ENCODE measurements at regions of chrX and their contacts with region 1.

Region 1: GRCh38 chrX:40539214-40540142 is 41.3 kb upstream of the ATP6AP2 start:
- DNase-seq: peak; percentile 55 to 80 (median 60)
- ATAC-seq: peak; percentile 97
- H3K4me3 ChIP-seq: no peak overlapping the region
- H3K27ac ChIP-seq: no peak overlapping the region
- H3K4me1 ChIP-seq: peaks cover 7 to 9% of the 10 kb centered on the region in 2 experiments; a peak in 3 of 5 replicates
- H3K27me3 ChIP-seq: 0 out of 5 replicates have a peak, but pooled peaks cover 0 to 6% of the 10 kb centered on the region in 2 experiments
- CTCF ChIP-seq: peak; percentile 64 to 76 (median 74)
- EP300 ChIP-seq: no peak
- POLR2A ChIP-seq: no peak
- RAD21 ChIP-seq: peak; percentile 35 to 70; a peak in 2 of 4 replicates

Region 2: GRCh38 chrX:39969099-39969818 is 570.2 kb before region 1 on chrX:
- CTCF ChIA-PET with region 1: no interaction called
- POLR2A ChIA-PET with region 1: no interaction called
- in situ Hi-C with region 1: no loop called
- intact Hi-C with region 1: no loop called
- DNase-seq: no peak
- ATAC-seq: peak; percentile 51; the same call in 2 of the 3 replicates
- H3K4me3 ChIP-seq: no peak overlapping the region
- H3K27ac ChIP-seq: no peak overlapping the region
- H3K4me1 ChIP-seq: peaks cover 0 to 5% of the 10 kb centered on the region in 2 experiments; a peak in 2 of 5 replicates
- H3K27me3 ChIP-seq: no peaks in the 10 kb centered on the region; a peak in 1 of 5 replicates
- CTCF ChIP-seq: no peak
- EP300 ChIP-seq: no peak
- POLR2A ChIP-seq: no peak
- RAD21 ChIP-seq: no peak

Region 3: DNA sequence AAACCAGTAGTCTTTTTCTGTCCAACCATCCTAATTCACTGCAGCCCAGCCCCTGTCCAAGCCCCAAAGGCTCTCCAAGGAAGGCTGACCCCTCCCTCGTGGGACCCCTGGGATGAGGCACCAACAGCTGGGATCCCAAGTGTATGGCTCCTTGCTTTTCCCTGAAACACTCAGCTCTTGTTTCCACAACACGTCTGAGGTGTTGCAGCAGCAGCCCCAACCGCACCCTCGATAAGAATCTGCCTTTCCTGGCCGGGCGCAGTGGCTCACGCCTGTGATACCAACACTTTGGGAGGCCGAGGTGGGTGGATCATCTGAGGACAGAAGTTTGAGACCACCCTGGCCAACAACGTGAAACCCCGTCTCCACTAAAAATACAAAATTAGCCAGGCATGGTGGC is 24.3 kb after region 1 on chrX:
- CTCF ChIA-PET with region 1: no interaction called
- POLR2A ChIA-PET with region 1: interaction called, 10 read pairs
- in situ Hi-C with region 1: no loop called
- intact Hi-C with region 1: no loop called
- DNase-seq: no peak
- ATAC-seq: peak; percentile 64
- H3K4me3 ChIP-seq: no peak overlapping the region
- H3K27ac ChIP-seq: no peak overlapping the region
- H3K4me1 ChIP-seq: no peaks in the 10 kb centered on the region; a peak in 1 of 5 replicates
- H3K27me3 ChIP-seq: no peaks in the 10 kb centered on the region
- CTCF ChIP-seq: no peak
- EP300 ChIP-seq: no peak
- POLR2A ChIP-seq: no peak
- RAD21 ChIP-seq: no peak

Region 4: GRCh38 chrX:40792433-40792832 is 253.0 kb after region 1 on chrX:
- CTCF ChIA-PET with region 1: interaction called, 4 read pairs
- POLR2A ChIA-PET with region 1: no interaction called
- in situ Hi-C with region 1: no loop called
- intact Hi-C with region 1: loop called (anchors 5 kb)
- DNase-seq: no peak
- ATAC-seq: no peak
- H3K4me3 ChIP-seq: no peak overlapping the region
- H3K27ac ChIP-seq: no peak overlapping the region
- H3K4me1 ChIP-seq: peaks cover 0 to 4% of the 10 kb centered on the region in 2 experiments; a peak in 2 of 5 replicates
- H3K27me3 ChIP-seq: no peaks in the 10 kb centered on the region
- CTCF ChIP-seq: no peak
- EP300 ChIP-seq: no peak
- POLR2A ChIP-seq: no peak
- RAD21 ChIP-seq: no peak

Region 5: GRCh38 chrX:40922307-40922706 is 382.8 kb after region 1 on chrX:
- CTCF ChIA-PET with region 1: interaction called, 3 read pairs
- POLR2A ChIA-PET with region 1: no interaction called
- in situ Hi-C with region 1: no loop called
- intact Hi-C with region 1: loop called (anchors 5 kb)
- DNase-seq: peak; percentile 31 to 64 (median 34)
- ATAC-seq: peak; percentile 74
- H3K4me3 ChIP-seq: no peak overlapping the region
- H3K27ac ChIP-seq: no peak overlapping the region
- H3K4me1 ChIP-seq: no peaks in the 10 kb centered on the region
- H3K27me3 ChIP-seq: no peaks in the 10 kb centered on the region
- CTCF ChIP-seq: peak; percentile 35 to 55 (median 52)
- EP300 ChIP-seq: no peak
- POLR2A ChIP-seq: no peak
- RAD21 ChIP-seq: peak; percentile 12 to 59; a peak in 2 of 4 replicates

Region 6: GRCh38 chrX:41259516-41259915 is 720.0 kb after region 1 on chrX:
- CTCF ChIA-PET with region 1: no interaction called
- POLR2A ChIA-PET with region 1: no interaction called
- in situ Hi-C with region 1: loop called (anchors 10 kb)
- intact Hi-C with region 1: loop called (anchors 10 kb)
- DNase-seq: no peak
- ATAC-seq: peak; percentile 51; the same call in 2 of the 3 replicates
- H3K4me3 ChIP-seq: no peak overlapping the region
- H3K27ac ChIP-seq: no peak overlapping the region
- H3K4me1 ChIP-seq: 0 out of 5 replicates have a peak, but pooled peaks cover 0 to 3% of the 10 kb centered on the region in 2 experiments
- H3K27me3 ChIP-seq: no peaks in the 10 kb centered on the region
- CTCF ChIP-seq: no peak
- EP300 ChIP-seq: no peak
- POLR2A ChIP-seq: no peak
- RAD21 ChIP-seq: peak in 1 of 2 experiments; percentile 8; a peak in 1 of 4 replicates